ENCODE measurements at regions of chr2 and their contacts with region 1.

Region 1: GRCh38 chr2:30711646-30712085 is 95.6 kb downstream of the CAPN13 start:
- DNase-seq: peak; percentile 94
- ATAC-seq: peak; percentile 80
- H3K4me3 Mint-ChIP-seq: no peak overlapping the region
- H3K27ac Mint-ChIP-seq: no peak overlapping the region
- H3K4me1 Mint-ChIP-seq: peaks cover 8% of the 10 kb centered on the region
- H3K27me3 Mint-ChIP-seq: no peaks in the 10 kb centered on the region

Region 2: GRCh38 chr2:30146438-30147147 is 565.1 kb before region 1 on chr2 and contains the start of gene YPEL5:
- CTCF ChIA-PET with region 1: interaction called, 118 read pairs
- POLR2A ChIA-PET with region 1: no interaction called
- DNase-seq: peak; percentile 99
- ATAC-seq: peak; percentile 92
- H3K4me3 Mint-ChIP-seq: peak within 1 kb of the TSS; percentile 83
- H3K27ac Mint-ChIP-seq: peak within 1 kb of the TSS; percentile 95
- H3K4me1 Mint-ChIP-seq: peaks cover 31% of the 10 kb centered on the region
- H3K27me3 Mint-ChIP-seq: no peaks in the 10 kb centered on the region
- total RNA-seq, gene YPEL5: 32.5 to 34.9 TPM

Region 3: DNA sequence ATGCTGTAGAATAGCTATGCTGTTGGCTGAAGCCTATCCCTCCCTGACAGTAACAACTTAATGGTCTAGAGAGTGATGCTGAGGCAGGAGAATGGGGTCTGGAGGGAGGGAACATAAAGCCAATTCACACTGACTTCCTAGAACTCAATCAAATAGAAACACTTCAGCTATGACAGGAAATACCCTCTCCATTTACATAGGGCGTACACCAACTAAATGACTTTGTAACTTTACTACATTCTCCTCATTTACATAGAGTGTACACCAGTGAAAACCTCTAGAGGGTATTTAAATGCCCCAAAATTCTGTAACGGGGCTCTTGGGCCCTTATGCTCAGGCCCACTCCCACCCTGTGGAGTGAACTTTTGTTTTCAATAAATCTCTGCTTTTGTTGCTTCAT is 523.4 kb before region 1 on chr2:
- CTCF ChIA-PET with region 1: interaction called, 16 read pairs
- POLR2A ChIA-PET with region 1: no interaction called
- DNase-seq: no peak
- ATAC-seq: no peak
- H3K4me3 Mint-ChIP-seq: no peak overlapping the region
- H3K27ac Mint-ChIP-seq: no peak overlapping the region
- H3K4me1 Mint-ChIP-seq: peaks cover 2% of the 10 kb centered on the region
- H3K27me3 Mint-ChIP-seq: peaks cover 4% of the 10 kb centered on the region

Region 4: DNA sequence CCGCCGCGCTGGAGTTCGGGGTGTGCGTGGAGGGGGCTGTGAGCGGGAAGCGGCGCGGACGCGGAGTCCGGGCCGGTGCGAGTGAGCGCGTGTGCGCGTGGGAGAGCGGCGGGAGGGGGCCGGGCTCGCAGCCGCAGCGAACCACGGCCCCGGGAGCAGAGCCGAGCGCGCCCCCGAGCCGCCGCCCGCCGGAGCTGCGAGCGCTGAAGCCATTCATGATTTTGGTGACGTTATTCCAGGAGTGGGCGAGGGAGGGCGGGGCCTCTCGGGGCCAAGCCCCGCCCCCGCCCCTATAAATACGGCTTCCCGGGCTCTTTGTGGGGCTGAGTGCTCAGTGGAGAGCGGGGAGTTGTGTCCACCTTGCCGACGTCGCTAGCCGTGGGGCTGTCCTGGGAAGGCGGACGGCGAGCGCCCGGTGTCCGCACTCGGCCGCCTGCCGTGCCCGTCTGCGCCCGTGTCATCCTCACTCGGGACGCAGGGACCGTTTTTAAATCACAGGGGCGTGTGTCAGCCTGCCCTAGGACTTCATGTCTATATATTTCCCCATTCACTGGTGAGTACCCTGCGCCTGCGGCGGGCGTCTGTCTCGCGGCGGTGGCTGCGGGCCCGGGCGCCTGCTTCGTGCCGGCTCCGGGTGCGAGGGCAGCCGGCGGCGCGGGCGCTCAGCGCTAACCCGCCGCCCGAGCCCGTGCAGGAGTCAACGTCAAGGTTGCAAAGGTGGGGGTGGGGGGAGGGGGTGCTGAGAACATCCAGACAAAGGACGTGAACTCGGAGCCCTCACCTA is 480.3 kb before region 1 on chr2 and contains the start of gene LBH:
- CTCF ChIA-PET with region 1: interaction called, 46 read pairs
- POLR2A ChIA-PET with region 1: no interaction called
- DNase-seq: peak; percentile 89
- ATAC-seq: peak; percentile 52
- H3K4me3 Mint-ChIP-seq: peak within 1 kb of the TSS; percentile 73
- H3K27ac Mint-ChIP-seq: peak within 1 kb of the TSS; percentile 93
- H3K4me1 Mint-ChIP-seq: peaks cover 64% of the 10 kb centered on the region
- H3K27me3 Mint-ChIP-seq: peaks cover 5% of the 10 kb centered on the region
- total RNA-seq, gene LBH: 97.0 to 100 TPM

Region 5: GRCh38 chr2:30686000-30686399 is 25.7 kb before region 1 on chr2:
- CTCF ChIA-PET with region 1: interaction called, 16 read pairs
- POLR2A ChIA-PET with region 1: no interaction called
- DNase-seq: peak; percentile 21
- ATAC-seq: no peak
- H3K4me3 Mint-ChIP-seq: no peak overlapping the region
- H3K27ac Mint-ChIP-seq: no peak overlapping the region
- H3K4me1 Mint-ChIP-seq: no peaks in the 10 kb centered on the region
- H3K27me3 Mint-ChIP-seq: no peaks in the 10 kb centered on the region

Region 6: GRCh38 chr2:31324000-31324633 is 612.5 kb after region 1 on chr2:
- CTCF ChIA-PET with region 1: interaction called, 11 read pairs
- POLR2A ChIA-PET with region 1: no interaction called
- DNase-seq: no peak
- ATAC-seq: peak; percentile 61
- H3K4me3 Mint-ChIP-seq: peak overlapping the region; percentile 44
- H3K27ac Mint-ChIP-seq: peak overlapping the region; percentile 74
- H3K4me1 Mint-ChIP-seq: peaks cover 45% of the 10 kb centered on the region
- H3K27me3 Mint-ChIP-seq: peaks cover 8% of the 10 kb centered on the region